GM10248 (cell line): ENCODE measurements at regions of chr7 and their contacts with region 1.

Region 1: GRCh38 chr7:154913638-154914312 is 89.1 kb downstream of the PAXIP1 start:
- DNase-seq: peak; percentile 87
- CTCF ChIP-seq: peak; percentile 97

Region 2: GRCh38 chr7:154892462-154892861 is 21.3 kb before region 1 on chr7:
- CTCF ChIA-PET with region 1: no interaction called
- POLR2A ChIA-PET with region 1: no interaction called
- DNase-seq: no peak
- CTCF ChIP-seq: no peak

Region 3: DNA sequence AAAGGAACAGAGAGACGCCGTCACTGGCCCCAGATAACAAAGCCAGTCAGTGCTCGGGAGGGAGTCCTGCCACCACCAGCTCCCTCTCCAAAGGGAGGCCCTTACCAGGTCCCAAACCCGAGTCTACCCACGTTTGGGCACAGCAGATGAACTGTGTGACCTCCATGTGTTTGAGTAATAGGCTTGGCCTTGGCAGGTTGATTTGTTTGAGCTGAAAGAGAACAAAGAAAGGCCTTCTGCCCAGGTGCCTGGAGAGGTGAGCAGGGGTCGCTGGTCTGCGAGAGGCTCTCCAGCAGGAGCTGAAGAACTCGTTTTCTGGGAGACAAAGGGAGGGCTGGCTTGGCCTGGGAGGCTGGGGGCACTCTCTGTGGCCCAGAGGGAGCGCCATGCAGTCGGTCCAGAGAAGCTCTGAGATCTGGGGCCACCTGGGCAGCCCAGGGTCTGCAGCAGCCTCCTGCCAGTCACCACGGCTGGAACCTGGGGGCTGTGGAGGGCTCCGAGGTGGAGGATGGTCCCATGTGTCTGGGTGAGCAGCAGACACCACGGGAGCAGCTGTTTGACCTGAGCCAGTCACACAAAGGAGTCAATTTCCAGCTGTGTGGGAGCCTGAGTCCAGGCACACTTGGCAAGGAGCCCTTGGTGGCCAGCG is 10.6 kb before region 1 on chr7:
- CTCF ChIA-PET with region 1: interaction called, 17 read pairs
- POLR2A ChIA-PET with region 1: no interaction called
- DNase-seq: no peak
- CTCF ChIP-seq: no peak

Region 4: GRCh38 chr7:154953006-154953684 is 39.4 kb after region 1 on chr7:
- CTCF ChIA-PET with region 1: interaction called, 13 read pairs
- POLR2A ChIA-PET with region 1: no interaction called
- DNase-seq: peak; percentile 50
- CTCF ChIP-seq: peak; percentile 57